Calu3 (cell line): ENCODE measurements at regions of chr20 and their contacts with region 1.

Region 1: DNA sequence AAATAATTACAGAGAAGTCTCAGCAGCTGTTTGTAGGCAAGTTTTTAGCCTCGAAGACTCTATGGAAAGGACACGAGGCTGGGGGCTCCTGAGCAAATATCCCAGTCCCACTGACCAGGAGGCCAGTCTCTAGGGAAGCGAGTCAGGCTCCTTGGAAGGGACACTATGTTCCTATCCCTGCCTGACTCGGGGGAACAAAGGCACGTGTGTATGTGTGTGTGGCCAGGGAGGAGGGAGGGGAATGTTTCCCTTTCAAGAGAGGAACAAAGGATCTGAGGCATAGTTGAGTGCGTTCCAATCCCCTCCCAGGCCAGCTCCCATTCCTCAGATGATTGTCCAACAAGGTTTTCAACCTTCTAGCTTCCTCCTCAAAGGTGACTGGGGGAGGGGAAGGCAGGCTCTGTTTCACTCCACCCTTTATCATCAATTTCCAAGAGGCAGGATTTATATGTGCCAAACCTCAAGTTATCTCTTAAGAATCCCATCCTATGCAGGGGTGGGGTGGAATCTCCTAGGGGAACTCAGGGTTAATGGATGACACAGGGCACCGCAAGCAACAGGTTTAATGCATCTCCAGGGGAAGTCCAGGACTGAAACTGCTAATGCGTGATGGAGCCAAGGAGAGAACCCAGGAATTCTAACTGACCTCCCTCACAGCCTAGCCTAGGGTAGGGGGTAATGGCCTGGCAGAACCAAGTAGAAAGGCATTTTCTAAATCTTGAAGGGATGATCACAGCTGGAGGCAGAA is 9.9 kb downstream of the BCL2L1 start:
- DNase-seq: peak; percentile 91
- H3K4me3 Mint-ChIP-seq: peak overlapping the region; percentile 97
- H3K27ac Mint-ChIP-seq: peak overlapping the region; percentile 94
- H3K4me1 Mint-ChIP-seq: peaks cover 100% of the 10 kb centered on the region
- H3K27me3 Mint-ChIP-seq: no peaks in the 10 kb centered on the region
- CTCF ChIP-seq: no peak

Region 2: GRCh38 chr20:31698803-31699718 is 13.7 kb before region 1 on chr20:
- CTCF ChIA-PET with region 1: interaction called, 84 read pairs
- intact Hi-C with region 1: loop called (anchors 1 kb)
- DNase-seq: peak; percentile 76
- H3K4me3 Mint-ChIP-seq: peak overlapping the region; percentile 56
- H3K27ac Mint-ChIP-seq: peak overlapping the region; percentile 85
- H3K4me1 Mint-ChIP-seq: peaks cover 79% of the 10 kb centered on the region
- H3K27me3 Mint-ChIP-seq: no peaks in the 10 kb centered on the region
- CTCF ChIP-seq: no peak

Region 3: DNA sequence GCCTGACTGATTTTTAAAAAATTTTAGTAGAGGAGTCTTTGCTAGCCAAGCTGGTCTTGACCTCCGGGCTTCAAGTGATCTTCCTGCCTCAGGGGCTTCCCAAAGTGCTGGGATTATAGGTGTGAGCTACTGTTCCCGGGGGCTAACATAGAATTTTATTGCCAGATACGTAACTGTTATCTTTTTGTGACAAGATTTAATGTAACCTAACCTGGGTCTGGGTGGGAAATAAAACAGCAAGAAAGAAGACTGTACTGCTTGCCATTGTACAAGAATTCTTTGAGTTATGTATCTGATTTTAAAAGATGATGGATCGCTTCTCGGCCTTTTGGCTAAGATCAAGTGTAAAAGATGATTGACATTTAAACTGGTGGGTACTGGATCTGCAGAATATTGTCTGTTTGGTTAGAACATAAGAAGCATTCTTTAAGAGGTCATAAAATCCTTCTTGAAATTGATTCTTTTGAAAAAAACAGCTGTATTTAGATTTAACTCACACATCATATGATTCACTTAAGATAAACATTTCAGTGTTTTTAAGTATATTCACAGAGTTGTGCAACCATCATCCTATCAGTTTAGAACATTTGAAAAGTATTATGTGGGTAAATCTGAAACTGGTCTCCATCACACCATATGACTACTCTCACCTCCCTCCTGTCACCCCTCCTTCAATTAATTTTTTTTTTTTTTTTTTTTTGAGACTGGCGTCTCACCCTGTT is 47.9 kb after region 1 on chr20:
- CTCF ChIA-PET with region 1: no interaction called
- intact Hi-C with region 1: no loop called
- DNase-seq: no peak
- H3K4me3 Mint-ChIP-seq: no peak overlapping the region
- H3K27ac Mint-ChIP-seq: no peak overlapping the region
- H3K4me1 Mint-ChIP-seq: no peaks in the 10 kb centered on the region
- H3K27me3 Mint-ChIP-seq: no peaks in the 10 kb centered on the region
- CTCF ChIP-seq: no peak